Psoas muscle (tissue), 8 donors: ENCODE measurements at regions of chr6 and their contacts with region 1.

Region 1: GRCh38 chr6:146700078-146700686 is 101.4 kb downstream of the ADGB start:
- DNase-seq: peak in 1 of 2 donors; percentile 29
- ATAC-seq: peak; percentile 51 to 82 (median 58)
- H3K4me3 ChIP-seq: no peak overlapping the region
- H3K27ac ChIP-seq: no peak overlapping the region
- H3K4me1 ChIP-seq: no peaks in the 10 kb centered on the region
- H3K27me3 ChIP-seq: no peaks in the 10 kb centered on the region
- CTCF ChIP-seq: peak; percentile 77

Region 2: DNA sequence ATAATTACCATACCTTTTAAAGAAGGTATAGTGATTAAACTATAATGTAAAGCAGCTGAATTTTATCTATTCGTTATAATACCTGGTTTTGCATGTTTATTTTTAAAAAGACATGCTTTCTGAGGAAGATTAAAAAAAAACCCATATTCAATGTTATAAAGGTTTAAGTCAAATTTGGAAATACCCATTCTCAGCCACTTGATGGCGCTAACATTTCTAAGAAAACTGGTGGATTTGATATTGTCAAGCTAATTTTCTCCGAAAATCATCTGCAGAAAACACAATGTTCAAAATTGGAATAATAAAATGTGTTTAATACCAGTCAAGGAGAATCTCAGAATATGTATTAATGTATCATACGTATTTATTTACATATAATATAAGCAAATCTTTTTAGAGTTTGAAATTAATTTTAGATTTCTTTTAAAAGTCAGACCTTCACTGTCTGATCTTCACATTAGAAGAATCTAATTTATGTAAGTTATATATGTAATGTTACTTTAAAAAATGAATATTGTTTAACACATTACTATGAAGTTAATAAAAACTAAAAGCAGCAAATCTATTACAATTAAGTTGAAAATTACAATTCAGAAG is 771.0 kb before region 1 on chr6:
- intact Hi-C with region 1: loop called in 1 of 2 experiments (anchors 5 kb)
- DNase-seq: no peak
- ATAC-seq: no peak
- H3K4me3 ChIP-seq: no peak overlapping the region
- H3K27ac ChIP-seq: no peak overlapping the region
- H3K4me1 ChIP-seq: no peaks in the 10 kb centered on the region
- H3K27me3 ChIP-seq: no peaks in the 10 kb centered on the region
- CTCF ChIP-seq: peak; percentile 66

Region 3: GRCh38 chr6:146029573-146030184 is 670.5 kb before region 1 on chr6:
- intact Hi-C with region 1: loop called in 1 of 2 experiments (anchors 10 kb)
- DNase-seq: peak in 1 of 2 donors; percentile 31
- ATAC-seq: no peak
- H3K4me3 ChIP-seq: no peak overlapping the region
- H3K27ac ChIP-seq: no peak overlapping the region
- H3K4me1 ChIP-seq: no peaks in the 10 kb centered on the region
- H3K27me3 ChIP-seq: peaks cover 0 to 40% (median 13%) of the 10 kb centered on the region in 3 donors
- CTCF ChIP-seq: no peak

Region 4: DNA sequence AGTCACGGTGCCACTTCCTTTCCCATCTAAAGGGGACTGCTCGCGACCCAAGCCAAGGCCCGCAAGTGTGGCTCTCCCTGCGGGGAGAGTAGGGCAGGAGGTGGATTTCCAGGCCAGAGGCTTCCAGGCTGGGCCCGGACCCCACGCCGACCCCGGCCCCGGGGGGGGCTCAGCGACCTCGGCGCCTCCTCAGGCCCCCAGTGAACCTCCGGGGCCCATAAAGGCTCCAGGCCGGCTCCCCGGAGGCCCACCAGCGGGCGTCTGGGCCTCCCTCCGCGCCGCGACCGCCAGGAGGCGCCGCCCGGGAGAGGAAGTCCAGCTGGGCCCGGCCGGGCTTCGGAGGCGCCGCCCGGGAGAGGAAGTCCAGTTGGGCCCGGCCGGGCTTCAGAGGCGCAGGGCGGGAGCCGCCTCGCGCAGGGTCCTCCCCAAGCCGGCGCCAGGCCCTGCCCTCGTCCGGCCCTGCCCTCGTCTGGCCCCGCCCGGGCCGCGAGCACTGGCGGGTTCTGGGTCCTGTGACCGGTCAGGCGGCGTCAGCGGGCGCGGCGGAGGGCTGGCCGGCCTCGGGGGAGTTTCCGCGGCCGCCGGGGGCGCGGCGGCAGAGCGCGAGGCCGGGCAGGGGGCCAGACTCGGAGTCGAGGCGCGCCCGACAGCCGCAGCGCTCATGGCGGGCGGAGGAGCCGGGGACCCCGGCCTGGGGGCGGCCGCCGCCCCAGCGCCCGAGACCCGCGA is 156.8 kb before region 1 on chr6 and contains the start of gene RAB32:
- intact Hi-C with region 1: no loop called
- DNase-seq: peak; percentile 95
- ATAC-seq: peak; percentile 87 to 98 (median 95)
- H3K4me3 ChIP-seq: peak within 1 kb of the TSS; percentile 65
- H3K27ac ChIP-seq: peak within 1 kb of the TSS; percentile 82
- H3K4me1 ChIP-seq: no peaks in the 10 kb centered on the region
- H3K27me3 ChIP-seq: peaks cover 0 to 7% (median 5%) of the 10 kb centered on the region in 3 donors
- CTCF ChIP-seq: peak; percentile 61
- total RNA-seq, gene RAB32: 2.4 to 3.8 (median 3.2) TPM

Region 5: GRCh38 chr6:146719387-146719786 is 19.2 kb after region 1 on chr6:
- intact Hi-C with region 1: no loop called
- DNase-seq: no peak
- ATAC-seq: no peak
- H3K4me3 ChIP-seq: no peak overlapping the region
- H3K27ac ChIP-seq: no peak overlapping the region
- H3K4me1 ChIP-seq: no peaks in the 10 kb centered on the region
- H3K27me3 ChIP-seq: no peaks in the 10 kb centered on the region
- CTCF ChIP-seq: no peak

Region 6: GRCh38 chr6:147769490-147770087 is 1069.4 kb after region 1 on chr6:
- intact Hi-C with region 1: no loop called
- DNase-seq: no peak
- ATAC-seq: no peak
- H3K4me3 ChIP-seq: no peak overlapping the region
- H3K27ac ChIP-seq: no peak overlapping the region
- H3K4me1 ChIP-seq: no peaks in the 10 kb centered on the region
- H3K27me3 ChIP-seq: no peaks in the 10 kb centered on the region
- CTCF ChIP-seq: no peak